Activated CD4-positive, alpha-beta T cell treated with anti-CD3 and anti-CD28 coated beads for 36 hours (primary cell): ENCODE measurements at regions of chrX and their contacts with region 1.

Region 1: DNA sequence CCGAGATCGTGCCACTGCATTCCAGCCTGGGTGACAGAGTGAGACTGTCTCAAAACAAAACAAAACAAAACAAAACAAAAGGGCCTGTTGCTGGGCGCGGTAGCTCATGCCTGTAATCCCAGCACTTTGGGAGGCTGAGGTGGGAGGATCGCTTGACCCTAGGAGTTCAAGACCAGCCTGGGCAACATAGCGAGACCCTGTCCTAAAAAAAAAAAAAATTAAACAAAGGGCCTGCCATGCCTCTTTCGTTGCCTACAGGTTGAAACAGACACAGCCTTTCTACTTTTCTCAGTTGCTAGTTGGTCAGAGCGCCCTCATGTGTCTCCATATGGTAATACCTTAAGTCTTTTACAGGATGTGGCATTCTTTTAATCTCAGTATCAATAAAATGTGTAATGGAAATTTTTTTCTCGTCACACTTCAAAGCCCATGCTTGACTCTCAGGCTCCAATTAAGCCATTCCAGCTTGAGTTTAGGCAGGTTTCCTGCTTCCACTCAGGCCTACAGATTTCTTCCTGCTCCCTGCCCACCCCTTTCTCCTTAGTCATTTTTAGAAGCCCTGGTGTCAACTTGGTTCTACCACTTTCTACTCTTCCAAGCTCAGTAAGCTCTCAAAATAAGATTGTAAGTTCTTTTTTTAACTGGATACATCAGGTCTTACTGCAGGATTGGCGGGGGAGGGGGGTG is 4.7 kb upstream of the SOWAHD start:
- DNase-seq: peak; percentile 67
- ATAC-seq: peak; percentile 51
- H3K4me3 Mint-ChIP-seq: peak overlapping the region; percentile 39
- H3K27ac Mint-ChIP-seq: peak overlapping the region; percentile 97
- H3K4me1 Mint-ChIP-seq: peaks cover 42% of the 10 kb centered on the region
- H3K27me3 Mint-ChIP-seq: no peaks in the 10 kb centered on the region

Region 2: DNA sequence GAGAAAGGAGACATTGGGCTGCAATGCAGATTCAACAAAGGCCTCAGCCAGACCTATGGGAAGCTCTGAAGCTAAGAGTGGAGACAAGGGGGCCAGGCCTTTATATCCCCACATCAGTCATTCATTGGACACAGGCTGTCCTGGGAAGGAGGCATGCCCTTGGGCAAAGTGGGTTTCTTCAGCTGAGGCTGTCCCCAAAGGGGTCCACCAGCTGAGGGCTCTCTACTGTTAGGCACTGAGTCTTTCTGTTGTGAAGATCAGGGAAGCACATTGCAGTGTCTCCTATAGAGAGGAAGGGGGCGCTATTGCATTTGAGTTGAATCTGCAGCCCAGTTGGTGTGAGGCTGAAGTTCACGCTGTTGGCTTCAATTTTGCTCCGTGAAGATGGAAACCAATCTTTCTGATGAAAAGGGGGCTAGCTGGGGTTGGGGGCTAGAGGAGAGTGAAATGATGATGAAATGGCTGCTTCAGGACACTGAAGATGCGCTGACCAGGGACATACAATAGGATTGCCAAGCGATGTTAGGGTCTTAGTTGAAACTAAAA is 237.5 kb before region 1 on chrX:
- CTCF ChIA-PET with region 1: interaction called, 4 read pairs
- POLR2A ChIA-PET with region 1: no interaction called
- intact Hi-C with region 1: loop called (anchors 2 to 10 kb)
- DNase-seq: peak; percentile 44
- ATAC-seq: peak; percentile 97
- H3K4me3 Mint-ChIP-seq: no peak overlapping the region
- H3K27ac Mint-ChIP-seq: no peak overlapping the region
- H3K4me1 Mint-ChIP-seq: peaks cover 4% of the 10 kb centered on the region
- H3K27me3 Mint-ChIP-seq: no peaks in the 10 kb centered on the region

Region 3: GRCh38 chrX:119647552-119648420 is 105.9 kb before region 1 on chrX:
- CTCF ChIA-PET with region 1: interaction called, 6 read pairs
- POLR2A ChIA-PET with region 1: interaction called, 4 read pairs
- intact Hi-C with region 1: loop called in 1 of 2 experiments (anchors 2 kb)
- DNase-seq: peak; percentile 81
- ATAC-seq: peak; percentile 96
- H3K4me3 Mint-ChIP-seq: peak overlapping the region; percentile 32
- H3K27ac Mint-ChIP-seq: peak overlapping the region; percentile 91
- H3K4me1 Mint-ChIP-seq: peaks cover 36% of the 10 kb centered on the region
- H3K27me3 Mint-ChIP-seq: no peaks in the 10 kb centered on the region

Region 4: GRCh38 chrX:119693040-119693995 is 60.4 kb before region 1 on chrX and contains the start of gene SEPTIN6:
- CTCF ChIA-PET with region 1: interaction called, 5 read pairs
- POLR2A ChIA-PET with region 1: interaction called, 16 read pairs
- intact Hi-C with region 1: loop called (anchors 1 to 2 kb)
- DNase-seq: peak; percentile 90
- ATAC-seq: peak; percentile 53
- H3K4me3 Mint-ChIP-seq: peak within 1 kb of the TSS; percentile 98
- H3K27ac Mint-ChIP-seq: peak within 1 kb of the TSS; percentile 98
- H3K4me1 Mint-ChIP-seq: peaks cover 3% of the 10 kb centered on the region
- H3K27me3 Mint-ChIP-seq: no peaks in the 10 kb centered on the region
- total RNA-seq, gene SEPTIN6: 183 to 233 TPM

Region 5: DNA sequence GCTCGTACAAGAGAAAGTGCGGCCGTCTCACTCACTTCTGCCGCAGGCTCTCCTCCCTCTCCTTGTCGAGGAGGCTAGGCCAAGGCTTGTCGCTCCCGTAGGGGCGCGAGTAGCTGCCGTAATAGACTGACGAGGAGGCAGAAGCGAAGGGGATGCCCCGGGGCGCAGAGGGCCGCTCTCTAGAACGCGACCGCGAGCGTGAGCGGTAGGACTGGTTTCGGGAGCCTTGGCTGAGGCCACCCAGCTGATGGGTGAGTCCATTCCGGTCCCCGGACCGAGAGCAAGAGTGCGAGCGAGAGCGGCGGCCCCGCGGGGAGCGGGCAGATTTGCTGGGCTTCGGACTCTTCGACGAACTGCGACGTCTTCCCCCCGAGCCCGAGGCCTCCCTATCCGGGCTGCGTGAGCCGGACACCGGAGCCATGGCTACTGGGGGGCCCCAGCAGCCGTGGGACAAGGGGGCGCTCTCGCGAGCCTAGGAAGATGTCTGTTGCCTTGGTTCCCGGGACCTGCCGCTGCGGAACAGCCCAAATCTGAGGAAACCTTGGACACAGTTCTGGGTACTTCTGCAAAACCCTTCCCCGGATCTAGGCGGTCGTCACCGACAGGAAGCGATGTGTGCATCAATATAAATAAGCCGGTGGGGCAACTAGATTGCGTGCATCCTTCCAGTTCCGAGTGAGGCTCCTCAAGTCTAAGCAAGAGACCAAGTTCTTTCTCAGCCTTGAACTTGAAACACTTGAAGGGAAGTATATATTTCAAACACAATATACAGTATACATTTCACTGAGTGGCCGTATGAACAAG is 189.7 kb after region 1 on chrX and contains the start of gene NKAP:
- CTCF ChIA-PET with region 1: no interaction called
- POLR2A ChIA-PET with region 1: no interaction called
- intact Hi-C with region 1: loop called in 1 of 2 experiments (anchors 10 kb)
- DNase-seq: peak; percentile 84
- ATAC-seq: peak; percentile 89
- H3K4me3 Mint-ChIP-seq: peak within 1 kb of the TSS; percentile 99
- H3K27ac Mint-ChIP-seq: peak within 1 kb of the TSS; percentile 98
- H3K4me1 Mint-ChIP-seq: peaks cover 20% of the 10 kb centered on the region
- H3K27me3 Mint-ChIP-seq: peaks cover under 1% of the 10 kb centered on the region
- total RNA-seq, gene NKAP: 11.8 to 12.2 TPM